AG04449 (cell line): ENCODE measurements at regions of chr15 and their contacts with region 1.

Region 1: GRCh38 chr15:50865515-50866353 is 42.7 kb upstream of the AP4E1 start:
- DNase-seq: no peak
- H3K4me3 ChIP-seq: no peak overlapping the region
- CTCF ChIP-seq: no peak

Region 2: DNA sequence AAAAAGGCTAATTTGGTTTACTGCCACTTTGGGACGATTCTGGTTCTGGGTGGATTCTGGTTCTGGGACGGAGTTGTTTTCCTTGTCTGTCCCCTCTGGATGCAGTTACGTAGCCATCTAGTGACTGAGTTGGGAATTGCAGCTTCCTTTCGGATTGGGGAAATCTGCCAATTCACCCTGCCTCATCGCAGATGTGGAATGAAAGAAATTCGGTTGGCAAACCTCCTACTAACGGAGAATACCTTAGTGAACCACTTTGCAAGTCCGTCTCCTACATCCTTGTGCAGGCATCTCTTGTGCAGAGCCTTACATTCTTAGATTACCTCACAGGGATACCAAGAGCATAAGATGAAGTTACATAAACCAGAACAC is 11.2 kb after region 1 on chr15:
- CTCF ChIA-PET with region 1: interaction called, 28 read pairs
- POLR2A ChIA-PET with region 1: no interaction called
- DNase-seq: peak; percentile 92
- H3K4me3 ChIP-seq: peak overlapping the region; percentile 31
- CTCF ChIP-seq: peak; percentile 83